ENCODE measurements at regions of chr7 and their contacts with region 1.

Region 1: DNA sequence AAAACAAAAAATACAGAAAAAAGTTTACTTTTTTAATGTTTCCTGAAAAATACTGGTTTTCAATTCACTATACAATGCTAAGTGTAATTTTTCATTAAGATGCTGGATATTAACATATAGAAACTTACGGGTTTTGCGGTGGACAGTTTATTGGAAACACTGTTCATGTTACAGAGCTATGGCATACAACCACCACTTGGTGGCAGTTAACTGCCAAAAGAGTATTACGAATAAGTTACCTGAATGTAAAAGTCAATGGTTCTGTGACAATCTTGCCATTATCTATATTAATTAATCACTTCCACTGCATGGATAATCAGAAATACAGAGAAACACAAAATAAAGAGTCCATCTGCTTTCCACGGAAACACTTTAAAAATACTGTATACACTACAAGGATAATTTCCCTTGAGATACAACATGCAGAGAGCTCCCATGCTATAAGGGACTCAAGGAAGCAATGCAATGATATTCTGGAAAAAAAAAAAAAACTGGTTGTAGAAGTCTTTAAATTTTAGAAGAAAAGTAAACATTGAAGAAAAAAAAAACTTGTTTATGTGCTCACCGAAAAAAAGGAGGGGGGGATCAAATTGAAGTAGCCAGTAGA is 97.0 kb downstream of the TPK1 start:
- DNase-seq: peak; percentile 56
- ATAC-seq: peak; percentile 58
- H3K4me3 ChIP-seq: no peak overlapping the region
- H3K4me3 Mint-ChIP-seq: no peak overlapping the region
- H3K27ac ChIP-seq: no peak overlapping the region
- H3K27ac Mint-ChIP-seq: no peak overlapping the region
- H3K4me1 ChIP-seq: peaks cover 0 to 10% of the 10 kb centered on the region in 2 donors
- H3K4me1 Mint-ChIP-seq: peaks cover 7% of the 10 kb centered on the region
- H3K27me3 ChIP-seq: no peaks in the 10 kb centered on the region
- H3K27me3 Mint-ChIP-seq: no peaks in the 10 kb centered on the region
- CTCF ChIP-seq: peak; percentile 91

Region 2: GRCh38 chr7:144854839-144855424 is 116.1 kb after region 1 on chr7:
- CTCF ChIA-PET with region 1: interaction called, 18 read pairs
- POLR2A ChIA-PET with region 1: no interaction called
- intact Hi-C with region 1: loop called (anchors 2 kb)
- DNase-seq: peak; percentile 23
- ATAC-seq: no peak
- H3K4me3 ChIP-seq: no peak overlapping the region
- H3K4me3 Mint-ChIP-seq: no peak overlapping the region
- H3K27ac ChIP-seq: no peak overlapping the region
- H3K27ac Mint-ChIP-seq: no peak overlapping the region
- H3K4me1 ChIP-seq: no peaks in the 10 kb centered on the region
- H3K4me1 Mint-ChIP-seq: no peaks in the 10 kb centered on the region
- H3K27me3 ChIP-seq: no peaks in the 10 kb centered on the region
- H3K27me3 Mint-ChIP-seq: peaks cover 26% of the 10 kb centered on the region
- CTCF ChIP-seq: peak; percentile 66

Region 3: DNA sequence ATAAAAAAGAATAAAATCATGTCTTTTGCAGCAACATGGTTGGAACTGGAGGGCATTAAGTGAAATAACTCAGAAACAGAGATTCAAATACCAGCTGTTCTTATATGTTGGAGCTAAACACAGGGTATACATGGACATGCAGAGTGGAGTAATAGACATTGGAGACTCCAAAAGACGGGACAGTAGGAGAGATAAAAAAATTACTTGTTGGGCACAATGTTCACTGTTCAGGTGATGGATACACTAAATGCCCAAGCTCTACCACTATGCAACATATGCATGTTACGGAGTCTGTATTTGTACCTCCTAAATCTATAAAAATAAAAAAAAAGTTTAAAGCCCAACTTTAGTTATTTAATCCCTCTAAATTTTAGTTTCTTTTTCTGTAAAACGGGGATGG is 281.6 kb after region 1 on chr7:
- CTCF ChIA-PET with region 1: interaction called, 3 read pairs
- POLR2A ChIA-PET with region 1: no interaction called
- intact Hi-C with region 1: loop called (anchors 5 kb)
- DNase-seq: no peak
- ATAC-seq: no peak
- H3K4me3 ChIP-seq: no peak overlapping the region
- H3K4me3 Mint-ChIP-seq: no peak overlapping the region
- H3K27ac ChIP-seq: no peak overlapping the region
- H3K27ac Mint-ChIP-seq: no peak overlapping the region
- H3K4me1 ChIP-seq: no peaks in the 10 kb centered on the region
- H3K4me1 Mint-ChIP-seq: no peaks in the 10 kb centered on the region
- H3K27me3 ChIP-seq: no peaks in the 10 kb centered on the region
- H3K27me3 Mint-ChIP-seq: no peaks in the 10 kb centered on the region
- CTCF ChIP-seq: no peak

Region 4: DNA sequence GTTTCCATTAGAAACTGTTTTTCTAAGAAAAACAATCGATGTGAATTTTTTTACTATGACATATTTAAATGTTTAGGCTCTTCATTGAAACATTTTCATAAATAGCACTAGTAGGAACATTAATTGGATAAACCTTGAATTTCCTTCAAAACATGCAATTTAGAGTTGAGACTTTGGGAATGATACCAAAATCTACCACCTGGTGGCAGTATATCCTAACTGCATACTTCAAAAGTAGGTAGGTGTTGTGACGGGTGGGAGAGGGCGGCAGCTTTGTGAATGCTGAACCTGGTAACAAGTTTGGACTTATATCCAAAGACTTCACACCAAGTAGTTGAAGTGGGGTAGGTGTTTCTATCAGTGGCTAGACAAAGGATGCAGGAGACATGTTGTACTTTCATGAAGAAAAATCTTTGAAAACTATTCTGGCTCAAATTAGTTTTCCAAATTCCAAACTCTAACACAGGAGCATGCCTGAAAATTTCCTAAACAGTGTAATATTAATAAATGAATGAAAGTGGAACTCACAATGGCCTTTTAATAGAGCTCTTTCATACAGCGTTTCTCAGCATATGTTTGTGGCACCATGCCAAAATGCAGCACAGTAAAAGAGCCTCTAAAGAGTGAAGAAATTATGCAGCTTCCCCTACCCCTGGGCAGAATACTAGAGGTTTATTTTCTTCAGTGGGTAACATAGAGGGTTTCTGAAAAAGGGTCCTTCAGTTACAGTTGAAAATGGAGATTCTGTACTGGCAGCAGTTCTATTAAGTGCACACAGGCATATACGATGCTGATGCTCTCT is 298.0 kb after region 1 on chr7:
- CTCF ChIA-PET with region 1: interaction called, 16 read pairs
- POLR2A ChIA-PET with region 1: no interaction called
- intact Hi-C with region 1: loop called (anchors 2 kb)
- DNase-seq: peak; percentile 56
- ATAC-seq: peak; percentile 57
- H3K4me3 ChIP-seq: no peak overlapping the region
- H3K4me3 Mint-ChIP-seq: no peak overlapping the region
- H3K27ac ChIP-seq: no peak overlapping the region
- H3K27ac Mint-ChIP-seq: no peak overlapping the region
- H3K4me1 ChIP-seq: no peaks in the 10 kb centered on the region
- H3K4me1 Mint-ChIP-seq: peaks cover 1% of the 10 kb centered on the region
- H3K27me3 ChIP-seq: no peaks in the 10 kb centered on the region
- H3K27me3 Mint-ChIP-seq: peaks cover 8% of the 10 kb centered on the region
- CTCF ChIP-seq: peak; percentile 93

Measured in B cell (primary cell).